Lower leg skin (tissue), 4 donors: ENCODE measurements at regions of chr3 and their contacts with region 1.

Region 1: DNA sequence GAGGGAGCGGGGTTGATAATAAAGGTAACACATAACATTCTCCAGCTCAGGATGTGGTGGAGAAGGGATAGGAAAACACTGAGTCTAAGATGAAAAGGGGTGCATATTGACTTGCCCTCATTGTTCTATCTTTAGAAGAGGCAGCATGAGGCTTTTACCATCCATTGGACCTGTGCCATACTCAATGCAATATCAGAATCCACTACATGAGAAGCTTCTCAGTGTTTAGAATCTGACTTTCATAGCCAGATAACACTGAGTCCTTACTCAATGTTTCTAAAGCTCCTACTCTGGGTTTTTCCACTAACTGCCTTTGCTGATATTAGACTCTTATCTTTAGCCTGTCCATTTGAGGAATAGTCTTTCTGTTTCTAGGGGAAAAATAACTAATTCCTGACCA is 24.3 kb upstream of the GADL1 start:
- DNase-seq: no peak
- H3K4me3 ChIP-seq: no peak overlapping the region
- CTCF ChIP-seq: no peak
- POLR2A ChIP-seq: no peak

Region 2: DNA sequence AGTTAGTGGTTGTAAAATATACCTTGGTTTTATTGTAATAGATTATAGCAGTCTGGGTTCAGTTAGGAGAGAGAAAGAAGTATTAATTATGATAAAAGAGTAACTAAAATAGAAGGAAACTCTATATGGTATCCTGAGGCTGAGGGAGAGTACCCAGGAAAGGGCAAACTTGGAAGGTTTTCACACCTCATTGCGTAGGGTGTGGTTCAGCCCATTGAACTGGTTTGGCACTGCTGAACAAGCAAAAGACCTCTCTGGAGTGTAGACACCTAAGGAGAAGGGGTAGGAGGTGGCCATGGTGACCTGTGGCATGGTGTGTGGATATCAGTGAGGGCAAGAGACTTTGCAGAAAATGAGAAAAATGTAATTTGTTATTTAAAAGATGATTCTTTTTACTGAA is 677.4 kb after region 1 on chr3:
- intact Hi-C with region 1: loop called (anchors 2 kb)
- DNase-seq: no peak
- H3K4me3 ChIP-seq: no peak overlapping the region
- CTCF ChIP-seq: no peak
- POLR2A ChIP-seq: no peak